CD8-positive, alpha-beta T cell (primary cell): ENCODE measurements at regions of chr1 and their contacts with region 1.

Region 1: DNA sequence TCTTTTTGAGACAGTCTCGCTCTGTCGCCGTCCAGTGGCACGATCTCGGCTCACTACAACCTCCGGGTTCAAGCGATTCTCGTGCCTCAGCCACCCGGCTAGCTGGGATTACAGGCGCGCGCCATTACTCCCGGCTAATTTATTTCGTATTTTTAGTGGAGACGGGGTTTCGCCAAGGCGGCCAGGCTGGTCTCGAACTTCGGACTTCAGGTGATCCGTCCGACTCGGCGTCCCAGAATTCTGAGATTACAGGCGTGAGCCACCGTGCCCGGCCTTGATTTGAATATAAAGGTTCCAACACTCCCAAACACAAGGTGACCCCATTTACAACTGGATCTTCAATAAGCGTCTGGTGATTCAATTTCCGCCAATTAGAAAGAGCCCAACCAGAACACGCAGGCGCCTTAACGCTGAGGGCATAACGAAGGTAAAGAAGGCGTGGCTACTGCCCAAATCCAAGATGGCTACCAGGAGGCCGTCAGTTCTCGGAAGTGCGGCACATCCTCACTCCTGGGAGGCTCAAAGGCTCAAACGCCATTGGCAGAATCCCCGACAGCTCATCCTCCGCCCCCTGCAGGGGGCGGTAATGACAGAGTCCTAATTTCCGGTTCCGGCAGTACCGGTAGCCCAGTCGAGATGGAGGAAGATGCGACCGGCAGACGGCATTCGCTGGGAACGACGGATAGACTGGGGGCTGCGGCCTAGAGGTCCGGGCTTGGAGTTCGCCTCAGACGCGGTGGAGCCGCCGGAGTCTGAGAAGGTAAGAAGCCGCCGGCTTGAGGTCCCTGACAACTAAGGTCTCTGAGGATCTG is at the start of gene SLC25A44:
- DNase-seq: peak; percentile 89 to 99 (median 97)
- ATAC-seq: peak; percentile 99
- H3K4me3 ChIP-seq: peak within 1 kb of the TSS; percentile 78 to 88
- H3K4me3 Mint-ChIP-seq: peak within 1 kb of the TSS; percentile 100
- H3K27ac ChIP-seq: peak within 1 kb of the TSS; percentile 67 to 85
- H3K27ac Mint-ChIP-seq: peak within 1 kb of the TSS; percentile 95
- H3K4me1 ChIP-seq: peaks cover 13% of the 10 kb centered on the region
- H3K4me1 Mint-ChIP-seq: peaks cover 47% of the 10 kb centered on the region
- H3K27me3 ChIP-seq: no peaks in the 10 kb centered on the region
- H3K27me3 Mint-ChIP-seq: no peaks in the 10 kb centered on the region
- CTCF ChIP-seq: peak; percentile 13
- total RNA-seq, gene SLC25A44: 12.1 to 12.6 TPM

Region 2: GRCh38 chr1:155688324-155689080 is 505.2 kb before region 1 on chr1 and contains the start of gene YY1AP1:
- CTCF ChIA-PET with region 1: no interaction called
- POLR2A ChIA-PET with region 1: no interaction called
- intact Hi-C with region 1: loop called in 1 of 2 experiments (anchors 2 kb)
- DNase-seq: peak; percentile 82 to 95 (median 91)
- ATAC-seq: peak; percentile 86
- H3K4me3 ChIP-seq: peak within 1 kb of the TSS; percentile 91 to 97
- H3K4me3 Mint-ChIP-seq: peak within 1 kb of the TSS; percentile 96
- H3K27ac ChIP-seq: peak within 1 kb of the TSS; percentile 92 to 96
- H3K27ac Mint-ChIP-seq: peak within 1 kb of the TSS; percentile 97
- H3K4me1 ChIP-seq: peaks cover 46% of the 10 kb centered on the region
- H3K4me1 Mint-ChIP-seq: peaks cover 68% of the 10 kb centered on the region
- H3K27me3 ChIP-seq: no peaks in the 10 kb centered on the region
- H3K27me3 Mint-ChIP-seq: no peaks in the 10 kb centered on the region
- CTCF ChIP-seq: no peak
- total RNA-seq, gene YY1AP1: 122 to 138 TPM

Region 3: DNA sequence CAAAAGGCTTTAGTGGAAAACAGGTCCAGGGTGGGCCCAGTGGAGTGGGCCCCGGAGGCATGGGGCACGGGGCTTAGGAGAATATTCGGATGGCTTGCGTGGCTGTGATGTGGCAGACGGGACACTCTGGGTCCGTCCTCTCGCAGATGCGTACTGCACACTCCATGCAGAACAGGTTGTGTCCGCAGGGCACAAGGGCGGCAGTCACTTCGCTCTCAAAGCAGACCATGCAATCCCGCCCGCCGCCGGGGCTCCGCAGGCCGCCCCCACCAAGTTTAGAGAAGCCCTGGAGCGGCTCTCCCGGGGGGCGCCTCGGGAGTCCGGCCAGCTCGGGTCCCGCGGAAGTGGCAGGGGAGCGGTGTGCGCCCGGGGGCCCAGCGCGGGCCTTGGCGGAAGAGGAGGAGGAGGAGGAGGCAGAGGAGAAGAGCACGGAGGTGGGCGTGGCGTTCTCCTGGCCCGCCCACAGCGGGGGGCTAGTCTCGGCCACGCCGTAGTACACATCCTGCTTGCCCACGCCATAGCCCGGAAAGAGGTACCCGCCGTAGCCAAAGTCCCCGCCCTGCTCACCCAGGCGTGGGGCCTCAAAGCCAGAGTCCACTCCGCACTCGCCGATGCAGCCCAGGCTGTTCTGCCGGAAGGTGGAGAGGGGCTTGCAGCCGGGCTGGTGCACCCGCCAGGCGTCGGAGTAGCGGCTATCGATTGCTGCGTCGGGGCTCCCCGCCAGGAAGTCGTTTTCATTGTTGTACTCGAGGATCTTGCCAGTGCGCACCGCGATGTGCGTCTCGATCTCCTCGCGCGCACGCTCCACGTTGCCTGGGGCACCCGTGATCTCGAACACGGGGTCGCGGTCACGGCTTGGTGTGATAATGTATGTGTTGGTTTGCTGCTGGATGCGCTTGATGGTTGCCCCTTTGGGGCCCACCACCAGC is 116.9 kb before region 1 on chr1:
- CTCF ChIA-PET with region 1: no interaction called
- POLR2A ChIA-PET with region 1: no interaction called
- intact Hi-C with region 1: no loop called
- DNase-seq: peak in 2 of 9 experiments; percentile 45 to 58
- ATAC-seq: no peak
- H3K4me3 ChIP-seq: peak overlapping the region in 1 of 2 experiments; percentile 8
- H3K4me3 Mint-ChIP-seq: peak overlapping the region; percentile 47
- H3K27ac ChIP-seq: no peak overlapping the region
- H3K27ac Mint-ChIP-seq: no peak overlapping the region
- H3K4me1 ChIP-seq: peaks cover under 1% of the 10 kb centered on the region
- H3K4me1 Mint-ChIP-seq: peaks cover 3% of the 10 kb centered on the region
- H3K27me3 ChIP-seq: peaks cover 0 to 5% of the 10 kb centered on the region in 2 experiments
- H3K27me3 Mint-ChIP-seq: peaks cover 1% of the 10 kb centered on the region
- CTCF ChIP-seq: no peak

Region 4: GRCh38 chr1:156212833-156213643 is 19.3 kb after region 1 on chr1 and contains the start of gene PMF1:
- CTCF ChIA-PET with region 1: interaction called, 9 read pairs
- POLR2A ChIA-PET with region 1: interaction called, 25 read pairs
- intact Hi-C with region 1: loop called (anchors 1 kb)
- DNase-seq: peak; percentile 89 to 97 (median 95)
- ATAC-seq: peak; percentile 95
- H3K4me3 ChIP-seq: peak within 1 kb of the TSS; percentile 70 to 79
- H3K4me3 Mint-ChIP-seq: peak within 1 kb of the TSS; percentile 97
- H3K27ac ChIP-seq: peak within 1 kb of the TSS; percentile 92 to 95
- H3K27ac Mint-ChIP-seq: peak within 1 kb of the TSS; percentile 99
- H3K4me1 ChIP-seq: peaks cover 24% of the 10 kb centered on the region
- H3K4me1 Mint-ChIP-seq: peaks cover 31% of the 10 kb centered on the region
- H3K27me3 ChIP-seq: no peaks in the 10 kb centered on the region
- H3K27me3 Mint-ChIP-seq: no peaks in the 10 kb centered on the region
- CTCF ChIP-seq: no peak
- total RNA-seq, gene PMF1: 72.1 to 74.4 TPM